ENCODE measurements at regions of chr2 and their contacts with region 1.

Region 1: DNA sequence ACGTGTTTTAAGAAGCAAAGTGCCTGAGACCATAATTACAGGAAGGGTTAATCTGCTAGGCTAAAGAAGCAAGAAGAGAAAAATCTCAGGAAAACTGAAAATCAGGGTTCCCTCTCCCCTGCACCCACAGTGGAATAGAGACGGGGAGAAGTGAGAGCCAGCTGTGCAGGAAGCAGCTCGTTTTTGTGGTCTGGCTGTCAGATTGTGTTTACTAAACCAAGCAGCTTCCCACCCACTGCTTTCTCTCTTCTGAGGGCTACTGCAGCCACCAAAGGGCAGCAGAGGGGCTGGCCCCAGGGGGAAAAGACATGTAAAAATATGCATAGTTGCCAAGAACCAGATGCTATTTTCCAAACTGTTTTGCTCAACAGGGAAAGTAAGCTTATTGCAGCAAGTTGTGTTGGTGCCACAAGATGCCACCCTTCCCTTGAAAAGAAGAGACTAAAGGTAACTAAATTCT is 72.6 kb upstream of the THUMPD2 start:
- DNase-seq: peak; percentile 26
- ATAC-seq: peak; percentile 90
- H3K4me3 Mint-ChIP-seq: no peak overlapping the region
- H3K27ac Mint-ChIP-seq: peak overlapping the region; percentile 14; the same call in 1 of the 2 replicates
- H3K4me1 Mint-ChIP-seq: peaks cover 23% of the 10 kb centered on the region
- H3K27me3 Mint-ChIP-seq: no peaks in the 10 kb centered on the region
- CTCF ChIP-seq: no peak

Region 2: GRCh38 chr2:39567507-39567906 is 284.2 kb before region 1 on chr2:
- CTCF ChIA-PET with region 1: no interaction called
- POLR2A ChIA-PET with region 1: no interaction called
- DNase-seq: no peak
- ATAC-seq: no peak
- H3K4me3 Mint-ChIP-seq: no peak overlapping the region
- H3K27ac Mint-ChIP-seq: no peak overlapping the region
- H3K4me1 Mint-ChIP-seq: peaks cover 6% of the 10 kb centered on the region
- H3K27me3 Mint-ChIP-seq: no peaks in the 10 kb centered on the region; the same call in 1 of the 2 replicates
- CTCF ChIP-seq: no peak

Region 3: DNA sequence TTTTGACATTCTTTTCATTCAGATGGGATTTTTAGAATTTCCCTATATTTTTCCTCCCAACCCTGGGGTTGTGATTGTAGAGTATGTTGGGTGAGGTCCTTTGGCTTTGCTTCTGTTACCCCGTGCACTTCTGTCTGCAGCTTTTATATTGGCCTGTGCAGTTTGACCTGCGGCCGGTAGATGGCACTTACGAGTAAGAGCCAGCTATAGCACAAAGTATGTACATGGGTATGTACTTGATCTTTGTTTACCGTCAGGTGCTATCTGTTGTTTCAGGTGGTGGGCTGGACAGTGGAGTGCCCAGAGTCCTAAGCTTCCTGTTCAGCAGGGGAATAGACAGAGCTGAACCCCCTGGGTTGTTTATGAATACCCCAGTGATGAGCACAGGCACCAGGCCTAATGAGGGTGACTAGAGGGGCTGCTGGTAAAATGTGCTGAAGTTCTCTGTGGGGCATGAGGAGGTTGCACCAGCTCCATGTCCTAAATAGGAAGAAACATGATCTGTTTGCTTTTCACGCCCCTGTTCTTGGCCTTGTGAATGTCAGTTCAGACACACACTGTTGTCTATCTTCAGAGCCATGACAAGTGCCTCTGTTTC is 13.7 kb before region 1 on chr2:
- CTCF ChIA-PET with region 1: interaction called, 17 read pairs
- POLR2A ChIA-PET with region 1: interaction called, 3 read pairs
- DNase-seq: peak; percentile 44
- ATAC-seq: peak; percentile 98
- H3K4me3 Mint-ChIP-seq: no peak overlapping the region
- H3K27ac Mint-ChIP-seq: no peak overlapping the region
- H3K4me1 Mint-ChIP-seq: peaks cover 15% of the 10 kb centered on the region
- H3K27me3 Mint-ChIP-seq: peaks cover 3% of the 10 kb centered on the region; the same call in 1 of the 2 replicates
- CTCF ChIP-seq: peak; percentile 85

Measured in WTC11 (cell line).